B cell (primary cell): ENCODE measurements at regions of chr12 and their contacts with region 1.

Region 1: GRCh38 chr12:95402096-95402495 is 71.9 kb upstream of the METAP2 start:
- DNase-seq: no peak
- ATAC-seq: no peak
- H3K4me3 ChIP-seq: no peak overlapping the region
- H3K4me3 Mint-ChIP-seq: no peak overlapping the region
- H3K27ac ChIP-seq: no peak overlapping the region
- H3K27ac Mint-ChIP-seq: no peak overlapping the region
- H3K4me1 ChIP-seq: no peaks in the 10 kb centered on the region
- H3K4me1 Mint-ChIP-seq: no peaks in the 10 kb centered on the region
- H3K27me3 ChIP-seq: peaks cover 0 to 8% (median 2%) of the 10 kb centered on the region in 4 experiments
- H3K27me3 Mint-ChIP-seq: peaks cover 26% of the 10 kb centered on the region
- CTCF ChIP-seq: no peak

Region 2: DNA sequence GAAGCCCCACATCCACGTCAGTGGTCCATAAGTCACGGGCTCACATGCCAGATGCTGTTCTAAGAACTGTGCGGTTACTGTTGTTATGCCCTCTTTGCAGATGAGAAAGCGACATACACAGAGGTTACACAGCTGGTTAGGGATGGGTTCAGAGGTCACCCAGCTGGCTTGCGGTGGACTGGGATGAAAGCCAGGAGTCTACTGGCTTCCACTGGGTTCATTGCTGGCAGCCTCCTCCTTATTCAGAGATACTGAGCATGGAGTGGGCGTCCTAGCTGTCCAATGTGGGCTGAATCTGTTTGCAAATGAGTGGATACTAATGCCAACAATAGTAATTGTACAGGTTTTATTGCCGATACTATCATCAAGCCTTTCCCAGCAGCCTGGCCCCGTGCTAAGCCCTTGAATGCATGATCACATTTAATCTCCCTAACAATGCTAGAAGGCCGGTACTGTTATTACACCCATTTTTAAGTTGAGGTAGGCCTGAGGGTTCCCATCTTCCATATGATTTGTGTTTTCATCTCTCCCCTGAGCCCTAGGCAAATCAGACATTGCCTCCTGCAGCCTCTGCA is 1124.6 kb before region 1 on chr12:
- CTCF ChIA-PET with region 1: no interaction called
- POLR2A ChIA-PET with region 1: no interaction called
- intact Hi-C with region 1: no loop called
- DNase-seq: no peak
- ATAC-seq: no peak
- H3K4me3 ChIP-seq: no peak overlapping the region
- H3K4me3 Mint-ChIP-seq: no peak overlapping the region
- H3K27ac ChIP-seq: no peak overlapping the region
- H3K27ac Mint-ChIP-seq: no peak overlapping the region
- H3K4me1 ChIP-seq: peaks cover 3 to 5% of the 10 kb centered on the region in 2 donors
- H3K4me1 Mint-ChIP-seq: peaks cover 17% of the 10 kb centered on the region
- H3K27me3 ChIP-seq: no peaks in the 10 kb centered on the region
- H3K27me3 Mint-ChIP-seq: no peaks in the 10 kb centered on the region
- CTCF ChIP-seq: no peak

Region 3: GRCh38 chr12:94980577-94980976 is 421.5 kb before region 1 on chr12:
- CTCF ChIA-PET with region 1: no interaction called
- POLR2A ChIA-PET with region 1: no interaction called
- intact Hi-C with region 1: no loop called
- DNase-seq: no peak
- ATAC-seq: no peak
- H3K4me3 ChIP-seq: no peak overlapping the region
- H3K4me3 Mint-ChIP-seq: no peak overlapping the region
- H3K27ac ChIP-seq: no peak overlapping the region
- H3K27ac Mint-ChIP-seq: no peak overlapping the region
- H3K4me1 ChIP-seq: no peaks in the 10 kb centered on the region
- H3K4me1 Mint-ChIP-seq: peaks cover 3% of the 10 kb centered on the region
- H3K27me3 ChIP-seq: no peaks in the 10 kb centered on the region
- H3K27me3 Mint-ChIP-seq: no peaks in the 10 kb centered on the region
- CTCF ChIP-seq: no peak

Region 4: DNA sequence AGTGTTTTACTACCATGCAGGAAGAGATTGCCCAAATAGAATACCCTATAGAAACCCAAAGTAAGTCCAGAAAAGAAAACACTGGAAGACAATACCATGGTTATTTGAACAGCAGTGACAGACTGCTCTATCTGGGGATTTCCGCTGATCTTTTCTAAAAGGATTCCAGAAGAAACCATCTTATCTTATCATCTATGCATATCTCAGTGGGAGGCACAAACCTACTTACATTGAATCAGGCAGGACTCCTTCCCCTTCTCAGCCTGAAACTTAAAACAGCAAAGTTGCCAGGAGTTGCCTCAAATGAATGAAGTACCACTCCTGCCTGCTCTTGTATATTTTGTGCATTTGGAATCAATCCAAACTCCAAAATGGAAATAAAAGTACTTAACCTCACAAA is 272.0 kb before region 1 on chr12:
- CTCF ChIA-PET with region 1: no interaction called
- POLR2A ChIA-PET with region 1: no interaction called
- intact Hi-C with region 1: no loop called
- DNase-seq: no peak
- ATAC-seq: no peak
- H3K4me3 ChIP-seq: no peak overlapping the region
- H3K4me3 Mint-ChIP-seq: no peak overlapping the region
- H3K27ac ChIP-seq: no peak overlapping the region
- H3K27ac Mint-ChIP-seq: no peak overlapping the region
- H3K4me1 ChIP-seq: no peaks in the 10 kb centered on the region
- H3K4me1 Mint-ChIP-seq: no peaks in the 10 kb centered on the region
- H3K27me3 ChIP-seq: no peaks in the 10 kb centered on the region
- H3K27me3 Mint-ChIP-seq: no peaks in the 10 kb centered on the region
- CTCF ChIP-seq: no peak

Region 5: GRCh38 chr12:95336390-95337067 is 65.6 kb before region 1 on chr12:
- CTCF ChIA-PET with region 1: no interaction called
- POLR2A ChIA-PET with region 1: no interaction called
- intact Hi-C with region 1: no loop called
- DNase-seq: no peak
- ATAC-seq: no peak
- H3K4me3 ChIP-seq: no peak overlapping the region
- H3K4me3 Mint-ChIP-seq: no peak overlapping the region
- H3K27ac ChIP-seq: no peak overlapping the region
- H3K27ac Mint-ChIP-seq: no peak overlapping the region
- H3K4me1 ChIP-seq: no peaks in the 10 kb centered on the region
- H3K4me1 Mint-ChIP-seq: no peaks in the 10 kb centered on the region
- H3K27me3 ChIP-seq: peaks cover 0 to 3% (median 0%) of the 10 kb centered on the region in 4 experiments
- H3K27me3 Mint-ChIP-seq: no peaks in the 10 kb centered on the region
- CTCF ChIP-seq: no peak

Region 6: GRCh38 chr12:95351748-95352147 is 50.3 kb before region 1 on chr12:
- CTCF ChIA-PET with region 1: no interaction called
- POLR2A ChIA-PET with region 1: interaction called, 11 read pairs
- intact Hi-C with region 1: no loop called
- DNase-seq: no peak
- ATAC-seq: no peak
- H3K4me3 ChIP-seq: no peak overlapping the region
- H3K4me3 Mint-ChIP-seq: no peak overlapping the region
- H3K27ac ChIP-seq: no peak overlapping the region
- H3K27ac Mint-ChIP-seq: no peak overlapping the region
- H3K4me1 ChIP-seq: peaks cover 0 to 4% of the 10 kb centered on the region in 2 donors
- H3K4me1 Mint-ChIP-seq: peaks cover 4% of the 10 kb centered on the region
- H3K27me3 ChIP-seq: peaks cover 0 to 12% (median 1%) of the 10 kb centered on the region in 4 experiments
- H3K27me3 Mint-ChIP-seq: peaks cover 21% of the 10 kb centered on the region
- CTCF ChIP-seq: no peak